HepG2 (cell line): ENCODE measurements at regions of chr4 and their contacts with region 1.

Region 1: GRCh38 chr4:40056716-40057585 is at the start of gene N4BP2:
- DNase-seq: peak; percentile 84
- ATAC-seq: peak; percentile 81
- H3K4me3 ChIP-seq: peak within 1 kb of the TSS; percentile 74 to 86 (median 84)
- H3K27ac ChIP-seq: peak within 1 kb of the TSS; percentile 99
- H3K4me1 ChIP-seq: peaks cover 31% of the 10 kb centered on the region
- H3K27me3 ChIP-seq: no peaks in the 10 kb centered on the region
- CTCF ChIP-seq: peak; percentile 84
- EP300 ChIP-seq: peak; percentile 13 to 71; a peak in 1 of 4 replicates
- POLR2A ChIP-seq: peak; percentile 60 to 64
- RAD21 ChIP-seq: peak; percentile 90
- total RNA-seq, gene N4BP2: 12.9 and 22.8 TPM in 2 replicates

Region 2: GRCh38 chr4:39977489-39978377 is 79.2 kb before region 1 on chr4 and contains the start of gene PDS5A:
- CTCF ChIA-PET with region 1: no interaction called
- POLR2A ChIA-PET with region 1: interaction called, 3 read pairs
- in situ Hi-C with region 1: no loop called
- intact Hi-C with region 1: loop called (anchors 1 kb)
- DNase-seq: peak; percentile 81
- ATAC-seq: peak; percentile 86
- H3K4me3 ChIP-seq: peak within 1 kb of the TSS; percentile 98 to 99 (median 99)
- H3K27ac ChIP-seq: peak within 1 kb of the TSS; percentile 90
- H3K4me1 ChIP-seq: peaks cover 43% of the 10 kb centered on the region
- H3K27me3 ChIP-seq: no peaks in the 10 kb centered on the region; a peak in 1 of 5 replicates
- CTCF ChIP-seq: peak; percentile 83
- EP300 ChIP-seq: 0 out of 4 replicates have a peak, but pooled peaks of 1 of the 2 experiments have one; percentile 36
- POLR2A ChIP-seq: peak; percentile 39 to 70
- RAD21 ChIP-seq: peak; percentile 95
- total RNA-seq, gene PDS5A: 57.0 and 77.4 TPM in 2 replicates

Region 3: DNA sequence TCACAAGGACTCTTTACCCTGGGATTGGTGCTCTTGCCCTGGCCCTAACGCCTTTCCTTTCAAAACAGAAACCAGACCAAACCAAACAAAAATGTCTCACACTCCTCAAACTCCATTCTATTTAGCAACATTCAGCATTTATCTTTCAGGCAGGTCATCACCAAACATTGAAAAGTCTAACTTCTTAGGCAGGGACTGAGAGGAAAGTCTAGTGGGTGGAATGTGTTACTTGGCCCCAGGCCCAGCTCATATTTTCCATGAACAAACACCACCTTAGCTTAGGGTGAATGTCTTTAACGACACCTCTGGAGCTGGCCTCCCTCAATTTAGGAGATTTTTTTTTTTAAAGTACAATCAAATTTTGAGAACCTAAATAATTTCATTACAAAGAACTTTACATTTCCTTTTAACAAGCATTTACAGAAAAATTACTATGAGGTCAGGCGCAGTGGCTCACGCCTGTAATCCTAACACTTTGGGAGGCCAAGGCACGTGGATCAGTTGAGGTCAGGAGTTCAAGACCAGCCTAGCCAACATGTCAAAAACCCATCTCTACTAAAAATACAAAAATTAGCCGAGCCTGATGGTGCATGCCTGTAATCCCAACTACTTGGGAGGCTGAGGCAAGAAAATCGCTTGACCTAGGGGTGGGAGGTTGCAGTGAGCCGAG is 10.5 kb before region 1 on chr4:
- CTCF ChIA-PET with region 1: interaction called, 3 read pairs
- POLR2A ChIA-PET with region 1: interaction called, 17 read pairs
- in situ Hi-C with region 1: no loop called
- intact Hi-C with region 1: no loop called
- DNase-seq: peak; percentile 93
- ATAC-seq: peak; percentile 97
- H3K4me3 ChIP-seq: peak overlapping the region in 2 of 3 experiments; percentile 25 to 32; a peak in 2 of 6 replicates
- H3K27ac ChIP-seq: peak overlapping the region; percentile 62
- H3K4me1 ChIP-seq: peaks cover 28% of the 10 kb centered on the region
- H3K27me3 ChIP-seq: no peaks in the 10 kb centered on the region; a peak in 1 of 5 replicates
- CTCF ChIP-seq: peak; percentile 25
- EP300 ChIP-seq: peak in 1 of 2 experiments; percentile 65; a peak in 2 of 4 replicates
- POLR2A ChIP-seq: no peak
- RAD21 ChIP-seq: 0 out of 2 replicates have a peak, but pooled peaks have one; percentile 18

Region 4: GRCh38 chr4:40309250-40309774 is 252.4 kb after region 1 on chr4:
- CTCF ChIA-PET with region 1: interaction called, 3 read pairs
- POLR2A ChIA-PET with region 1: no interaction called
- in situ Hi-C with region 1: loop called (anchors 10 kb)
- intact Hi-C with region 1: loop called (anchors 2 kb)
- DNase-seq: peak; percentile 64
- ATAC-seq: peak; percentile 98
- H3K4me3 ChIP-seq: peak overlapping the region in 1 of 3 experiments; percentile 51; a peak in 3 of 6 replicates
- H3K27ac ChIP-seq: no peak overlapping the region
- H3K4me1 ChIP-seq: peaks cover 5% of the 10 kb centered on the region; the same call in 1 of the 2 replicates
- H3K27me3 ChIP-seq: 0 out of 5 replicates have a peak, but pooled peaks cover 0 to 1% of the 10 kb centered on the region in 2 experiments
- CTCF ChIP-seq: peak; percentile 96
- EP300 ChIP-seq: no peak
- POLR2A ChIP-seq: no peak
- RAD21 ChIP-seq: peak; percentile 84

Region 5: DNA sequence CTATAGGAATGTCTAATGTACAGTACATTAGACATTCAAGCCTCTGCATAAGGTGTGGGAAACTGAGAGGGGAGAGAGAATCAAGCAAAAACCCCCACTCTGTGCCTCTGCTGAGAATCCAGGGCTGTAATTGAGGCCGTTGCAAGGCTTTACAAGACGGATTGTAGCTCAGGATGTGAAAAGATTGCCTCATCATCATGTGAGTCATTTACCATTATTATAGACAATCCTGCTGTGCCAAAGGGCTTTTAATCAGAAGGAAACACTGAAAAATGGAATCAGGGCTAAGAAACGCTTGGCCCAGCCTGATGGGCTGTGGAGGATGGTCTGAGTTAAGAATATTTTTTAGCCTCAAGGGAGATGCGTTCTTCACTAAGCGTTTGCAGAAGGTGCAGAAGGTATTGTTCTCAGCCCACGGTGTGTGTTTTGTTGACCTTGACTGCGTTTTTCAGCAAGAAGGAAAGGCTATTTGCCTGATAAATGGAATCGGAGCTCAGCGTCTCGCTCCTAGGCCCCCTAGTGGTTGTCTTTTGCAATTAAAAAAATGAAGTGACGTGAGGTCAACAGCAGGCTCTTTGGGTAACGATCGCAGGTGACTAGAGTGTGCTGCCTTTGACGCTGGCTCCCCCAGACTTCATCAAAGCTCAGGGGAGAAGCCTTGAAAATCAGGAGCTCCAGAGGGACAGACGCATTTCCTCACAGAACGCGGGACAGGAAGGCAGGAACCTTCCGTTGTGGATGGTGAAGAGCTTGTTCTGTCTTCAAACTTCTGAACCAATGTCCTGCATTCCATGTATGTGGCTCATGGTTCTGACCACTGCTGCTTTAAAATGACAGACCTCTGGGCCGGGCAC is 260.1 kb after region 1 on chr4:
- CTCF ChIA-PET with region 1: no interaction called
- POLR2A ChIA-PET with region 1: no interaction called
- in situ Hi-C with region 1: loop called (anchors 10 kb)
- intact Hi-C with region 1: no loop called
- DNase-seq: peak; percentile 47
- ATAC-seq: peak; percentile 92
- H3K4me3 ChIP-seq: peak overlapping the region in 1 of 3 experiments; percentile 37; a peak in 2 of 6 replicates
- H3K27ac ChIP-seq: no peak overlapping the region
- H3K4me1 ChIP-seq: peaks cover 15% of the 10 kb centered on the region
- H3K27me3 ChIP-seq: 0 out of 5 replicates have a peak, but pooled peaks cover 0 to 1% of the 10 kb centered on the region in 2 experiments
- CTCF ChIP-seq: peak; percentile 80
- EP300 ChIP-seq: no peak
- POLR2A ChIP-seq: no peak
- RAD21 ChIP-seq: 0 out of 2 replicates have a peak, but pooled peaks have one; percentile 12